ENCODE measurements at regions of chr5 and their contacts with region 1.

Region 1: DNA sequence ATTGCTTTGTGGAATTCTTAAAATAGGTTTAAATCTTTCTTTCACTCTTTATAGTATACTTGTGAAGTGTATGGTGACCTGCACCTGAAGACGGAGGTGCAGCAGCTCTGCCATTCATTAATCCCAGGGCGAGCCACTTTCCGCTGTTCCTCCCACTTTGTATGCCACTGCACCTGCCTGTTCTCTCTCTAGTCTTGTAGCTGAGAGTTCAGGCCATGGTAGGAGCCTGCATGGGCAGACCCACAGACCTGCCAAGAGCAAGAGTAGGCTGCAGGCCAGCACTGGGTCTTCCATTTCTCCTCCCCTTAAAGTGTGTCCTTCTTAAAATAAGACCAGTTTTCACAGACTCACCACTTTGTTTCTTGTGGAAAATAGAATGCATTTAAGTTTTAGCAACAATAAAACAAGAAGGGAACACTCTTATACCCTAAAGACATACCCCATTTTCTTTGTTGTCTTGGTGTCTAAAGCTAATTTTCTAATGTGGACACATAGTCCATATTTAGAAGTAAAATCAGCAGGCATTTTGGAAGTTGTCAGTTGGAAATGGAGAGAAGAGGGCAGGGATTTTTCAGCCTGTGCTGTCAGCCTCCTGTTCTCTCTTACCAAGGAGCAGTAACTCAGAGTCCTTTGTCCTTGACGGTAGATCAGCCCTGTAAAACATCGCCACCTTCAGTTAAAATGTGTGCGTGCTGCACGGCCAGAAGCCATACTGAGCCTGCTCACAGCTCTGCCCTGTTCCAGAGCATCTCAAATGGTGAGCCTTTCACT is 103.2 kb downstream of the SNCAIP start:
- DNase-seq: peak; percentile 40
- ATAC-seq: peak; percentile 95

Region 2: GRCh38 chr5:121899346-121899745 is 515.9 kb before region 1 on chr5:
- intact Hi-C with region 1: no loop called
- DNase-seq: no peak
- ATAC-seq: no peak

Region 3: GRCh38 chr5:122192497-122193496 is 222.4 kb before region 1 on chr5:
- intact Hi-C with region 1: loop called (anchors 5 kb)
- DNase-seq: no peak
- ATAC-seq: peak; percentile 69

Region 4: DNA sequence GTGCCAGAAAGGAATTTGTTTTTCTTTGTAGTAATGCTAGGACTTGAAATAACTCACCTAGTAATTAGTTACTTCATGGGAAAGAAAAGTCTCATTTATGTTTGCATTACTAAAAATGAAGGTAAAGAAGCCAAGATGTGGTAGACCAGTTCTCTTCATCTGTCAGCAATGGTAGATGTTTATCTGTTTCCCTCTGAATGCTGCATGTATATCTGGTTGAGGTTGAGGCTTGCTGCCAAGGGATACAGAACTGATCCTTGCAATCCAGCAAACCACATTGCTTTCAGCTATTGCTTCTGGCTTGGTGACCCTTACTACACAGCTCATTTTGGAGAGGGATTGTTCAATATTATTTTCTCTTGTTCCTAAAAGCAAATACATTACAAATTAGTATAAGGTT is 212.3 kb before region 1 on chr5:
- intact Hi-C with region 1: loop called (anchors 5 kb)
- DNase-seq: no peak
- ATAC-seq: no peak

Region 5: GRCh38 chr5:122295138-122295537 is 120.1 kb before region 1 on chr5:
- intact Hi-C with region 1: no loop called
- DNase-seq: no peak
- ATAC-seq: no peak

Region 6: GRCh38 chr5:122704243-122705036 is 289.2 kb after region 1 on chr5:
- intact Hi-C with region 1: no loop called
- DNase-seq: no peak
- ATAC-seq: peak; percentile 60

Region 7: GRCh38 chr5:123371575-123372179 is 956.5 kb after region 1 on chr5:
- intact Hi-C with region 1: no loop called
- DNase-seq: peak; percentile 57
- ATAC-seq: no peak

Measured in left ventricle myocardium superior (tissue), 1 donor.